ENCODE measurements at regions of chr6 and their contacts with region 1.

Region 1: GRCh38 chr6:35139908-35140655 is 1.1 kb downstream of the TCP11 start:
- DNase-seq: peak in 6 of 10 donors; percentile 24 to 89 (median 56)

Region 2: DNA sequence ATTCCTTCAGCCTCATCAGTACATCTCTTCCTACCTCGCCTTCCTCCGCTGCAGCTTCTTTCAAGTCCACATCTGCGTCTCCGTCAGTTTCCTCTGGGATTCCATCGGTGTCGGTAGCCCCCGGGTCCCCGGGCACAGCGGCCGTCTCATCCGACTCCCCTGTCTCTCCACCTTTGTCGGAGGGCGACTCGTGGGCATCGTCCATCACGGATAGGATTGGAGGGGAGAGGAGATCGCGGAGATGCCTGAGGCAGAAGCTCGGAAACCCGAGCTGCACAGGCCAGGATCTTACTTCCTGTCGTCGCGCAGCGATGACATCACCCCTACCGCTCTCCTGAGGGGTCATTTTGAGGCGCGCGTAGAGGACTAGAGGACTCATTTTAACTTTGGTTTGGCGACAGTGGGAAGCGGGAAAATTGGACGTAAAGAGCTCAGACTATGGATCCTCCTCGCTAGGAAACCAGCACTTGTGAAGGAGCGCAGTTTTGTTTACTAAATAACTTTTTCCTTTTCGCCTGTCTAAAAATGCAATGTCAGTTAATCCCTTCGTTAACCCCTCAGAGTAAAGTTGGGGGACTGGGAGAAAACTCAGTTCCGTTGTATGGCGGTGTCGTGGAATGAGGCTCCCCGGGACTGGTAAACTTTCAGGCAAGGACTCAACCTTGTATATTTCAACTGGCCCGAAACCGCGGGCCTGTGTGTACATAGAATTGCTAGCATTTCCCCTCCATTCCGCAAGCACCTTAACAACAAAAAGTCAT is 252.1 kb before region 1 on chr6 and contains the start of gene TAF11:
- intact Hi-C with region 1: loop called (anchors 10 kb)
- DNase-seq: peak; percentile 88 to 98 (median 92)

Measured in posterior cingulate gyrus (tissue), 11 donors.